ENCODE measurements at regions of chr10 and their contacts with region 1.

Region 1: DNA sequence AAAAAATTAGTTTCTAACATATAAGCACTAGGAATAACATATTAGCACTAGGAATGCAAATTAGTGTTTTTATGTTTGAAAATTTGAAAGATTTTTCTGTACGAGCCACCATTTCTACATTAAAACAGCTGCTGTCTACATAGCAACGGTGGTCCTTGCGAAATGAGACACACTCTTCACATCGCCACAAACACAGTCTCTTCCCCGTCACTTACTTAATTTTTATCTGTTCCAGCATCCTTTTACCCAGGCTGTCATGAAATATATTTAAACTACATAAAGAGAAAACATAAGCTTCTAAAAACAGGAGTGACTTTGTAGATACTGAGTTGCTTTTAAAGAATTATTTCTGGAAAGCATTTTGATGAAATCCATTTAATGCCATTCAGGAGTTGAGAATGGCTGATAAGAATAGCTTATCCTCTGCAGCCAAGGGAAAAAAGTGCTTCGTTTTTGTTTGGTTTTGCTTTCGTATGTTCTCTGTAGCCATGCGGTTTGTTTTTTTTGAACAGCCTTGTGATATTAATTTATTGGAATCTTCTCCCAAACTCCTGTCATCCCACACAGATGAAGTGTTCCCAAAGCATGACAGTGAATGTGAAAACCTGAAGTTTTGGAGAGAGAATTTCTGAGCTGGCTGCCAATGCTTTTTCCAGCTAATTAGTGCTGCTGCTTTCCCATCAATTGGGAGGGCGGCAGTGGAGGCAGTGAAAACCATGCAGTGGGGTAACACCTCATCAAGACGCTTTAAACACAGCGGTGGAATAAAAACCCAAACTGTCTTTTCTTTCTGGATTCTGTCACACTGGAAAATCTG is 603.7 kb upstream of the ADARB2 start:
- DNase-seq: no peak
- H3K4me3 ChIP-seq: no peak overlapping the region
- H3K27ac ChIP-seq: no peak overlapping the region
- H3K4me1 ChIP-seq: no peaks in the 10 kb centered on the region
- H3K27me3 ChIP-seq: no peaks in the 10 kb centered on the region
- CTCF ChIP-seq: no peak
- EP300 ChIP-seq: no peak
- POLR2A ChIP-seq: no peak

Region 2: GRCh38 chr10:1249142-1249920 is 1091.7 kb before region 1 on chr10:
- in situ Hi-C with region 1: no loop called
- intact Hi-C with region 1: loop called (anchors 5 kb)
- DNase-seq: no peak
- H3K4me3 ChIP-seq: no peak overlapping the region
- H3K27ac ChIP-seq: no peak overlapping the region
- H3K4me1 ChIP-seq: no peaks in the 10 kb centered on the region
- H3K27me3 ChIP-seq: peaks cover 8% of the 10 kb centered on the region
- CTCF ChIP-seq: no peak
- EP300 ChIP-seq: no peak
- POLR2A ChIP-seq: no peak

Measured in transverse colon (tissue), 4 donors.